Activated CD8-positive, alpha-beta T cell treated with anti-CD3 and anti-CD28 coated beads for 36 hours (primary cell): ENCODE measurements at regions of chr17 and their contacts with region 1.

Region 1: GRCh38 chr17:2380226-2380922 is 20.5 kb downstream of the MNT start:
- DNase-seq: no peak
- ATAC-seq: no peak
- H3K4me3 Mint-ChIP-seq: no peak overlapping the region
- H3K27ac Mint-ChIP-seq: peak overlapping the region; percentile 34
- H3K4me1 Mint-ChIP-seq: no peaks in the 10 kb centered on the region
- H3K27me3 Mint-ChIP-seq: no peaks in the 10 kb centered on the region
- CTCF ChIP-seq: no peak

Region 2: GRCh38 chr17:2392252-2393173 is 12.1 kb after region 1 on chr17:
- CTCF ChIA-PET with region 1: interaction called, 51 read pairs
- POLR2A ChIA-PET with region 1: interaction called, 37 read pairs
- intact Hi-C with region 1: no loop called
- DNase-seq: peak; percentile 97
- ATAC-seq: peak; percentile 73
- H3K4me3 Mint-ChIP-seq: peak overlapping the region; percentile 95
- H3K27ac Mint-ChIP-seq: peak overlapping the region; percentile 95
- H3K4me1 Mint-ChIP-seq: peaks cover 54% of the 10 kb centered on the region
- H3K27me3 Mint-ChIP-seq: no peaks in the 10 kb centered on the region
- CTCF ChIP-seq: no peak

Region 3: GRCh38 chr17:2401426-2402221 is 21.2 kb after region 1 on chr17:
- CTCF ChIA-PET with region 1: interaction called, 46 read pairs
- POLR2A ChIA-PET with region 1: interaction called, 43 read pairs
- intact Hi-C with region 1: no loop called
- DNase-seq: peak; percentile 100
- ATAC-seq: peak; percentile 64
- H3K4me3 Mint-ChIP-seq: peak overlapping the region; percentile 97
- H3K27ac Mint-ChIP-seq: peak overlapping the region; percentile 94
- H3K4me1 Mint-ChIP-seq: peaks cover 41% of the 10 kb centered on the region
- H3K27me3 Mint-ChIP-seq: no peaks in the 10 kb centered on the region
- CTCF ChIP-seq: no peak

Region 4: GRCh38 chr17:2427215-2427614 is 46.8 kb after region 1 on chr17:
- CTCF ChIA-PET with region 1: interaction called, 20 read pairs
- POLR2A ChIA-PET with region 1: no interaction called
- intact Hi-C with region 1: no loop called
- DNase-seq: no peak
- ATAC-seq: no peak
- H3K4me3 Mint-ChIP-seq: no peak overlapping the region
- H3K27ac Mint-ChIP-seq: no peak overlapping the region
- H3K4me1 Mint-ChIP-seq: peaks cover 2% of the 10 kb centered on the region
- H3K27me3 Mint-ChIP-seq: no peaks in the 10 kb centered on the region
- CTCF ChIP-seq: no peak

Region 5: DNA sequence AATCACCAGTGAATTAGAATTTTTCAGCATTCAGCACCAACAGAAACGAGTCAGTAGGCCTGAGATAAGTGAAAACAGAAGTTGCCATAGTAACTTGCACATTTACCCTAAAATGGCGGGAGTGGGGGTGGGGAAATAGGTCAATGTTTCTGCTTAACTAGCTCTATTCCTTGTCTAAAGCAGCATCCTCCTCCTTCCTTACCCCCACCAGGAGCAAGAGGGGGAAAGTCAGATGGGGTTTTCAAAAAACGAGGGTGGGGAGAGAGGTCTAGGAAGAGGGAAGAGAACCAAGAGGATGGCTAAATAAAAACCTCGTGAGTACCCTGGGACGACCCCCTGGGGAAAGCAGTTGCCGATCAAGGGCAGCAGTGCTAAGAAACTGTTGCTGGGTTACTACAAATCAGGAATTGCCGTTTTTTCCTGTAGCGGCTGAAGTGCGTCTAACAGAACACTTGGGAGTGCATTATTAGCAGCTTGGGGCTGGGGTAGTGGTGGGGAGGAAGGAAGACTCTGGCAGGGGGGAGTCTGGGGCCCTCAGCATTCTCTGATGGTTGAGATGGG is 54.9 kb after region 1 on chr17:
- CTCF ChIA-PET with region 1: interaction called, 11 read pairs
- POLR2A ChIA-PET with region 1: no interaction called
- intact Hi-C with region 1: no loop called
- DNase-seq: no peak
- ATAC-seq: no peak
- H3K4me3 Mint-ChIP-seq: no peak overlapping the region
- H3K27ac Mint-ChIP-seq: no peak overlapping the region
- H3K4me1 Mint-ChIP-seq: peaks cover 6% of the 10 kb centered on the region
- H3K27me3 Mint-ChIP-seq: no peaks in the 10 kb centered on the region
- CTCF ChIP-seq: no peak